ENCODE measurements at regions of chr17 and their contacts with region 1.

Region 1: GRCh38 chr17:79888811-79889634 is 49.8 kb upstream of the CBX4 start:
- DNase-seq: no peak
- H3K4me3 ChIP-seq: no peak overlapping the region
- H3K27ac ChIP-seq: no peak overlapping the region
- H3K27me3 ChIP-seq: peaks cover 40% of the 10 kb centered on the region
- CTCF ChIP-seq: no peak

Region 2: GRCh38 chr17:79991140-79991923 is 102.3 kb after region 1 on chr17:
- CTCF ChIA-PET with region 1: no interaction called
- POLR2A ChIA-PET with region 1: interaction called, 11 read pairs
- DNase-seq: peak; percentile 43
- H3K4me3 ChIP-seq: no peak overlapping the region
- H3K27ac ChIP-seq: no peak overlapping the region
- H3K27me3 ChIP-seq: no peaks in the 10 kb centered on the region
- CTCF ChIP-seq: peak; percentile 59

Region 3: DNA sequence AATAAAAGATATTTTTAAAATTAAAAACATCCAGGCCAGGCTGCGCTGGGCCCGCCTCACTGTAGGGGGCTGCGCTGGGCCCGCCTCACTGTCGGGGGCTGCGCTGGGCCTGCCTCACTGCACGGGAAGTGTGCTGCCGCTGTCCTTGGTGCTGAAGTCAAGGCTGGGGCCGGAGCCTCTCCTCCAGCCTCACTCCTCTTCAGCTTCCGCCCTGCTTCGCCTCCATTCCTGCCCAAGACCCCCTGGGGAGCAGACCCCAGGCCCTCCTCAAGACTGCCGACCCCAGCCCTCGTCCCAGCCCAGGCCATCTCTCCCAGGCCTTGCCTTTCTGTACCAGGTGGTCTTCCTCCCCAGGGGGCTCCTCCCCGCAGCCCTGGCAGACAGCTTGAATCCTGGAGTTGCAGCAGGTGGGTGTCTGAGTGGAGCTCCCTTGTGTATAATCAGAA is 552.1 kb after region 1 on chr17:
- CTCF ChIA-PET with region 1: no interaction called
- POLR2A ChIA-PET with region 1: no interaction called
- DNase-seq: no peak
- H3K4me3 ChIP-seq: no peak overlapping the region
- H3K27ac ChIP-seq: no peak overlapping the region
- H3K27me3 ChIP-seq: peaks cover 26% of the 10 kb centered on the region
- CTCF ChIP-seq: no peak

Measured in AG04450 (cell line).